ENCODE measurements at regions of chr19 and their contacts with region 1.

Region 1: DNA sequence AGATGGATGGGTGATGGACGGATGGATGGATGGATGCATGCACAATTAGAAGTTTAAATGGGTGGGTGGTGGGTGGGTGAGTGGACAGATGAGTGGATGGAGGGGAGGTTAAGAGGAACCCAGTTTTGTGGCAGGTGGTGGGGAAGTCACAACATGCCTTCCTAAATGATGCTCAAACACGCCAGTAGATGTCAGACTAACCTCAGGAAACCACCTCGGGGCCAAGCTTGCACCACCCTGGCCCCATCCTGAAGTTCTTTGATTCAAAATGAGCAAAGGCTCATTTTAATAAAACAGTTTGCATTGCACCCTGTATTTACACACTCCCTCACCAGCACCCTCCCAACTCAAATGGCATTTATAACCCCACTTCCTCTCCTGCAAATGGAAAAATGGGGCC is 91.4 kb upstream of the CACNA1A start:
- DNase-seq: peak in 4 of 5 donors; percentile 26 to 54 (median 42)
- ATAC-seq: peak; percentile 75 to 83 (median 78)
- H3K4me3 ChIP-seq: no peak overlapping the region
- H3K27ac ChIP-seq: no peak overlapping the region
- H3K4me1 ChIP-seq: no peaks in the 10 kb centered on the region
- H3K27me3 ChIP-seq: peaks cover 0 to 52% (median 0%) of the 10 kb centered on the region in 9 donors
- CTCF ChIP-seq: peak; percentile 34 to 73 (median 64)
- POLR2A ChIP-seq: no peak

Region 2: DNA sequence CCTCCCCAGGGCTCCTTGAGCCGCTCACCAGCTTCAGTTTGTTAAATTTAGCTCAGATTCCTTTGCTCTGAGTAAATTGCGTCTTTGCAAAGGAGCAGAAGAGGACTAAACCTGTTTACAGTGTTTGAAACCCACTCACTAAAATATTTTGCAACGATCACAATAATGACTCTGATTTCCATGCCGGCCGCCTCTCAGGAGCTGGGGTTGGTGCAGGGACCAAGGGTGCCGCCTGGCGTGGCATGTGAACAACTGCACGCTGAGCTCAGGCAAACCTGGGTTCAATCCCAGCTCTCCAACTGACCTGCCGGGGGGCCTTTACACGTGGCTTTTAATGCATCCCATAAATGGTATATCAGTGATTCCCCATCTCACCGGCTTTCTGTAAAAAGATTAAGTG is 22.7 kb before region 1 on chr19:
- intact Hi-C with region 1: no loop called
- DNase-seq: no peak
- ATAC-seq: no peak
- H3K4me3 ChIP-seq: no peak overlapping the region
- H3K27ac ChIP-seq: no peak overlapping the region
- H3K4me1 ChIP-seq: no peaks in the 10 kb centered on the region
- H3K27me3 ChIP-seq: peaks cover 0 to 14% (median 0%) of the 10 kb centered on the region in 9 donors
- CTCF ChIP-seq: peak in 2 of 12 donors; percentile 18 to 20
- POLR2A ChIP-seq: no peak

Region 3: GRCh38 chr19:13689085-13689484 is 91.4 kb after region 1 on chr19:
- intact Hi-C with region 1: no loop called
- DNase-seq: no peak
- ATAC-seq: no peak
- H3K4me3 ChIP-seq: no peak overlapping the region
- H3K27ac ChIP-seq: no peak overlapping the region
- H3K4me1 ChIP-seq: no peaks in the 10 kb centered on the region
- H3K27me3 ChIP-seq: peaks cover 0 to 20% (median 0%) of the 10 kb centered on the region in 9 donors
- CTCF ChIP-seq: no peak
- POLR2A ChIP-seq: no peak

Region 4: GRCh38 chr19:13718733-13719132 is 121.1 kb after region 1 on chr19:
- intact Hi-C with region 1: loop called (anchors 1 to 5 kb)
- DNase-seq: peak in 3 of 5 donors; percentile 25 to 58 (median 33)
- ATAC-seq: peak in 3 of 4 donors; percentile 81 to 85 (median 81)
- H3K4me3 ChIP-seq: no peak overlapping the region
- H3K27ac ChIP-seq: no peak overlapping the region
- H3K4me1 ChIP-seq: no peaks in the 10 kb centered on the region
- H3K27me3 ChIP-seq: peaks cover 0 to 11% (median 0%) of the 10 kb centered on the region in 9 donors
- CTCF ChIP-seq: peak in 10 of 12 donors; percentile 19 to 50 (median 36)
- POLR2A ChIP-seq: no peak

Region 5: DNA sequence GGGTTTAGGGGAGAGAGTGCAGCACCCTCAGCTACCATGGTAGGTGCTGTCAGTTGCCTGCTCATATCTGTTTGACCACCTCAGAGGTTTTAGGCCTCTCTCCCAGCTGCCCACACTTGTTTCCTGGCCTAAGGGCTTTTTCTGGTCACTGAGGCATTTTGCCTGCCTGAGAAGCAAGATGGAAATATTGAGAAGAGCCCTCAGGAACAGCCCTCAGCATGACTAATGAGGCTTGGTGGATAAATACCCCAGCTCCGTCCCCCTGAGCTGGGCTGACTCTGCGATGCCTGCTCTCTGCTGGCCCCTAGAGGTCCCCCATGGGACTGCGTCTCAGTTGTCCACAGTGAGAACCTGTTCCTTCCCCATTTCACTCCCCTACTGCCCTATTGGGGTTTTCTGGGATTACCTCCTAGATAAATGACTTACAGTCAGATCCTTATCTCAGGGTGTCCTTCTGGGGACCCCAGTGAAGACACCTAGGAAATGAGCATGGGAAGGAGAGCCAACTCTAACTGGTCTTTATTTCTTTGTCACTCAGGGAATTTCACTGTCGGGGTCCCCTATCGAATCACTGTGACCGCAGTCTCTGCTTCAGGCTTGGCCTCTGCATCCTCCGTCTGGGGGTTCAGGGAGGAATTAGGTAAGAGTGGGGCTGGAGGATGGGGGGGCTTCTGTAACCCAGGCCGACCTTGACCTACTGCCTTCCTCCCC is 451.0 kb after region 1 on chr19:
- intact Hi-C with region 1: loop called in 1 of 10 experiments (anchors 10 kb)
- DNase-seq: peak in 3 of 5 donors; percentile 31 to 76 (median 42)
- ATAC-seq: peak in 3 of 4 donors; percentile 59 to 68 (median 66)
- H3K4me3 ChIP-seq: no peak overlapping the region
- H3K27ac ChIP-seq: no peak overlapping the region
- H3K4me1 ChIP-seq: no peaks in the 10 kb centered on the region
- H3K27me3 ChIP-seq: no peaks in the 10 kb centered on the region
- CTCF ChIP-seq: peak; percentile 70 to 91 (median 82)
- POLR2A ChIP-seq: no peak

Region 6: GRCh38 chr19:14059093-14059480 is 461.4 kb after region 1 on chr19:
- intact Hi-C with region 1: loop called in 1 of 10 experiments (anchors 10 kb)
- DNase-seq: no peak
- ATAC-seq: no peak
- H3K4me3 ChIP-seq: no peak overlapping the region
- H3K27ac ChIP-seq: no peak overlapping the region
- H3K4me1 ChIP-seq: peaks cover 0 to 18% (median 2%) of the 10 kb centered on the region in 12 donors
- H3K27me3 ChIP-seq: peaks cover 5 to 34% (median 28%) of the 10 kb centered on the region in 9 donors
- CTCF ChIP-seq: peak; percentile 41 to 68 (median 57)
- POLR2A ChIP-seq: no peak